ENCODE measurements at regions of chr10 and their contacts with region 1.

Region 1: GRCh38 chr10:72337020-72337629 is 17.6 kb downstream of the DNAJB12 start:
- DNase-seq: peak; percentile 92
- H3K4me3 Mint-ChIP-seq: no peak overlapping the region
- H3K27ac Mint-ChIP-seq: no peak overlapping the region
- H3K4me1 Mint-ChIP-seq: peaks cover 64% of the 10 kb centered on the region
- H3K27me3 Mint-ChIP-seq: no peaks in the 10 kb centered on the region
- CTCF ChIP-seq: peak; percentile 97

Region 2: GRCh38 chr10:72126184-72126871 is 210.8 kb before region 1 on chr10:
- CTCF ChIA-PET with region 1: interaction called, 10 read pairs
- intact Hi-C with region 1: loop called (anchors 2 kb)
- DNase-seq: peak; percentile 24
- H3K4me3 Mint-ChIP-seq: no peak overlapping the region
- H3K27ac Mint-ChIP-seq: no peak overlapping the region
- H3K4me1 Mint-ChIP-seq: peaks cover 32% of the 10 kb centered on the region
- H3K27me3 Mint-ChIP-seq: no peaks in the 10 kb centered on the region
- CTCF ChIP-seq: no peak

Region 3: GRCh38 chr10:72243822-72244643 is 93.1 kb before region 1 on chr10:
- CTCF ChIA-PET with region 1: interaction called, 5 read pairs
- intact Hi-C with region 1: loop called (anchors 2 kb)
- DNase-seq: peak; percentile 72
- H3K4me3 Mint-ChIP-seq: peak overlapping the region; percentile 13
- H3K27ac Mint-ChIP-seq: peak overlapping the region; percentile 95
- H3K4me1 Mint-ChIP-seq: peaks cover 74% of the 10 kb centered on the region
- H3K27me3 Mint-ChIP-seq: no peaks in the 10 kb centered on the region
- CTCF ChIP-seq: peak; percentile 59